ENCODE measurements at regions of chr16 and their contacts with region 1.

Region 1: GRCh38 chr16:58471321-58471975 is 28.5 kb upstream of the NDRG4 start:
- DNase-seq: no peak
- ATAC-seq: peak; percentile 30
- H3K4me3 ChIP-seq: no peak overlapping the region
- H3K27ac ChIP-seq: no peak overlapping the region
- H3K4me1 ChIP-seq: no peaks in the 10 kb centered on the region
- H3K27me3 ChIP-seq: peaks cover 32% of the 10 kb centered on the region
- CTCF ChIP-seq: no peak

Region 2: DNA sequence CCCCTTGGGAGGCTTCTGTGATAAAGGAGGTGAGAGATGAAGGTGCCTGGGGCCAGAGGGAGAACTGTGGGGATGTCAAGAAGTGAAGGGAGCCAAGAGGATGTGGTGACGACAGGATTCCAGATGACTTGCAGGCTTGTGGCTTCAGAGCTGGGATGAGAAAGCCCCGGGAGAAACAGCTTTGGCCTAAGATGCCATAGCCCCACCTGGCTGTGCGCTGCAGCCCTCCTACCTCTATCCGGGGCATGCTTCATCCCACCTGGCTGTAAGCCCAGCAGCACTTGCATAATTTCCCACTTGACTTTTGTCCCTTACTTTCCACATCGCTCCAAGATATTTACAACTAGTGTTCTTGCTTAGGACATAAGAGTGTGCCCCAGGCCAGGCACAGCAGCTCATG is 49.9 kb before region 1 on chr16:
- intact Hi-C with region 1: loop called (anchors 5 kb)
- DNase-seq: peak; percentile 66
- ATAC-seq: peak; percentile 49
- H3K4me3 ChIP-seq: no peak overlapping the region
- H3K27ac ChIP-seq: no peak overlapping the region
- H3K4me1 ChIP-seq: no peaks in the 10 kb centered on the region
- H3K27me3 ChIP-seq: no peaks in the 10 kb centered on the region
- CTCF ChIP-seq: no peak